Activated T-helper 2 cell treated with anti-CD3 and anti-CD28 coated beads, Interferon-gamma antibody, Interleukin-2, Interleukin-4, amounts not matched to agents 10 μg/mL and 5 μg/mL and 100 μg/mL, durations not matched to agents 14 hours and 24 hours and 36 hours (primary cell): ENCODE measurements at regions of chr16 and their contacts with region 1.

Region 1: GRCh38 chr16:88437373-88437964 is 15.6 kb upstream of the ZFPM1 start:
- DNase-seq: peak; percentile 45
- H3K4me3 Mint-ChIP-seq: no peak overlapping the region
- H3K27ac Mint-ChIP-seq: no peak overlapping the region
- H3K4me1 Mint-ChIP-seq: no peaks in the 10 kb centered on the region
- H3K27me3 Mint-ChIP-seq: no peaks in the 10 kb centered on the region

Region 2: DNA sequence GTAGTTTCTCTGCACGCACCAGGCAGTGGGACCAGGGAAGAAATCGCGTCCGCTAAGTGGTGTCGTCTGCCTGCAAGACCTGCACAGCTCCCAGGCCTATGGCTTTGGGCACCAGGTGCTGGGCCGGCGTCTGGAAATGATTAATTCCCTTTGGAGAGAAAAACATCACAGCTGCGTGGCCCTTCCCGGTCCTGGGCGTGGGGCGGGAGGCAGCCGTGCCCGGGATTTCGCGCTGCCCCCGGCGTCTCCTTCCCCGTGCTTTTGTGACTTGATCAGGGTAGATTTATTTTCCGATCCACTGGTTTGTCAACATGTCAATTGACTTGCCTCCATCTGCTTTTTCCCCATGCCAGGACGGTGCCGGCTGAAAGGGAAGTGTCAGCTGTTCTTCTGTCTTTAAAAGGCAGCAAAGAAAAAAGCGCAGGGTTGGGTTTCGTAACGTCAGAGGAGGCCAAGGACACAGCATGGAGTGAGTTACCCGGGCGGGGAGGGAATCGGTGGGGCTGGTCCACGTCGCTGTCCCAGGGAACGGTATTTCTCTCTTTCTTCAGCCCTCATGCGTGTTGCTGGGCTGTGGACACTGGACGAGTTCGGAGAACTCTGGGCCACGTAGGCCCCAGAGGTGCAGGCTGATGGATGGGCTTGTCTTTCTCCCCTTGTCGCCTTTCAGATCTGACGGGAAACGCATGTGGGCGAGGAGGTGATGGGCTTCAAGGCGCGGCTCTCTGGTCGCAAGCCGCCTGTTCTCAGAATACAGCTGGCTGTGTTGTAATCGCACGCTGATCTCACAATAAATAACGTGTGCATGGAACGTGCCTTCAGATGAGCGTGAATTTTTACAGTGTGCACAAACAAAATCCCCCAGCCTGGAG is 242.8 kb before region 1 on chr16:
- intact Hi-C with region 1: loop called (anchors 10 kb)
- DNase-seq: no peak
- H3K4me3 Mint-ChIP-seq: no peak overlapping the region
- H3K27ac Mint-ChIP-seq: no peak overlapping the region
- H3K4me1 Mint-ChIP-seq: peaks cover 1% of the 10 kb centered on the region
- H3K27me3 Mint-ChIP-seq: peaks cover 3% of the 10 kb centered on the region